ENCODE measurements at regions of chr6 and their contacts with region 1.

Region 1: DNA sequence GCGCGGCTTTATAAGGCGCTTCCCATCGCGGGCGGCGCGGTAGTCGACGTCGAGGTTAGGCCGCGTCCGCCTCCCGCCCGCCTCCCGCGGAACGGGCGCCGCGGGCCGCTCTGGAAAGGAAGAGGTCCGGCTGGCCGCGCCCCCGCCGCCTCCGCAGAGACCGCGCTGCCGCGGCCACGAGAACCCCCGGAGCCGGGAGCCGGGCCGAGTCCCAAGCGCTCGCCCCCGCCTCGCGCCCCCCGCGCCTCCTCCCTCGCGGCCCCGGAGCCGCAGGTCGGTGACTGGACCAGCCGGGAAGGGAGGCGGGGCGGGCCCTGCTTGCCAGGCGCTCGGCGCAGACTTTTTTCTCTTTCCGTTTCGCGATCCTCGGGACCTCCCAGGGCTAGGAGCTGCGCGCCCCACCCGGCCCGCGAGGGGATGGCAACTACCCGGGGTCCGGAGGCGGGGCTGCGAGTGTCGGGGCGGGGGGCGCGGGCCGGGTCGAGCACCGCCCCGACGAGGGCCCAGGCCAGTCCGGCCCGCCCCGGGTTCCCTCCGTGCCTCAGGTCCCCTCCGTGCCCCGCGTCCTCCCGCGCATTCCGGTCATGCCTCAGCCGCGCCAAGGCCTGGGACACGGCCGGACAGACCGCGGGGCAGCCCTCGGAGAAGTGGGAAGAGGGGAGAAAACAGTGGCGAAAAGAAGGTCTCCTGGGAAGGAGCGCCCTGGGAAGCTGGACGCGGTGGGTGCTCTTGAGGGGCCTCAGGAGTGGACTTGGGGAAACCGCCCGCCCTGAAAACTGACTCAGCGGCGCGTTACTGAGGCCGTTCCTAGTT is 423 bp upstream of the PXDC1 start:
- DNase-seq: peak; percentile 95 to 98
- ATAC-seq: peak; percentile 78
- H3K4me3 ChIP-seq: peak overlapping the region; percentile 75 to 98
- H3K27ac ChIP-seq: peak overlapping the region; percentile 97 to 99
- H3K4me1 ChIP-seq: no peaks in the 10 kb centered on the region
- H3K27me3 ChIP-seq: no peaks in the 10 kb centered on the region

Region 2: DNA sequence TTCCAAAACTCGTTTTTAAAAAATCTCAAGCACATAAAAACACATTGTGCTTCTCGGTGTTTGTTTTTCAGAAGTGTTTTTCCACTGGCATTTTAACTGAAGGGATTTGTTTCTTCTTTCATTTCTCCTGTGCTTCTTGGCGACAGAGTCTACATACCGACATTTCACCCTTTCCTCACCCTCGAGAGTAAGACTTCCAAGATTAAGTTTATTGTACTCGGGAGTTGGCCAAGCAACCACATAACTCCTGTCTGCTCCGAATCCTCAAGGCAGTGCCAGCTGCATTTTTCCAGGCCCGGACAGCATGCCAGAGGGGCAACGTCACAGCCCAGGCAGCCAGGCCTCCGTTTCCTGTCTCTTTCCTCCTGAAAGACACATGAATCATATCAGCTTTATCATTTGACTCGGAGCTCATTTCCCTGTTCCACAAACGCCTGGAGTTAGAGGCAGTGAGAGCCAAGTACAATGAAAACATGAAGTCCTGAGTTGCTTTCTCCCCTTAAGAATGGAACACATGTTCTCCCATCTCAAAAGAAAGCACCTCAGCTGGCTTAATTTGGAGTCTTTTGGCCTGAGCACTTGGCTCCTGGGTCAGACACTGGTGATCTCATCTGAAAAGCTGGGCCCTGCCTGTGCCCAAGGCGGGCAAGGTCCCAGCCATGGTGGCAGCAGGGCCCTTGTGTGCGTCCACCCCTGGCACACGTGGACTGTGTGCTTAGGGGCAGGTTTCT is 74.1 kb after region 1 on chr6:
- intact Hi-C with region 1: loop called (anchors 1 to 2 kb)
- DNase-seq: peak; percentile 96 to 97
- ATAC-seq: peak; percentile 93
- H3K4me3 ChIP-seq: no peak overlapping the region
- H3K27ac ChIP-seq: peak overlapping the region; percentile 90 to 98
- H3K4me1 ChIP-seq: no peaks in the 10 kb centered on the region
- H3K27me3 ChIP-seq: no peaks in the 10 kb centered on the region

Region 3: DNA sequence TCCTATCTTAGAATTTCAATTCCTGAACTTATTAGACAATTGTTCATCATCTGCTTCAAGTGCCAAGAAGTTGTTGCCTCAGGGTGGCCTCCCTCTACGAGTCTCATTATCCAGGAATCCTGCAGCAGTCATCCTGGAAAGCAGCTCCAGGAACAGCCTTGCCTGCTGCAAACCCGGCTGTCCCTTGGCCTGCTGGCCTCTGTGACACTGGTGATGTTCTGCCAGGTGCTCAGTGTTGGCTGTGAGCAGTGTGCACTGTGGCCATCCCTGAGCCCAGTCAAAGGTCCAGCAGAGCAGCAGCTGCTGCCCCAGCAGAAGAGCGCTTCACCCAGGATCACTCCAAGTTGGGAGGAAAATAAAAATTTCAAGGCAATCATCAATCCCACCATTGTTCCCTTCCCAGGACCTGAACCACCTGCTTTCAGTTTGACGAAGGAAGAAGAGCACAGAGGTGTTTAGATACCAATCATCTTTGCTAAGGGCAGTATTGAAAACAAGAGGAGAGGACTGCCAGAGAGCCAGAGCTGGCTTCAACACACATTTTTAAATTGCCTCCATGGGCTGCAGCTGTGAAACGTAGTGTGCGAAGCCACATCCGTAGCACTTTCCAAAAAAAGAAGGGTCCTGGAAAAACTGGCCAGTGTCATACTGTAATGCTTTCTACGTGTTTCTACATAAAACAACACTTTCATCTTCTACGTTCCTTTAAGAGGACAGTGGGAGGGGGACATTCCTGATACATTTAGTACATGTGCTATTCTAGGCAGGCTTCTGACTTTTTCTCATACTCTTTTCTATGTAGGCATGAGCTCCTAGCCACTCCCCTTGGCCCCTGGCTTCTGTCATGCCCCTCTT is 90.0 kb after region 1 on chr6:
- intact Hi-C with region 1: loop called in 1 of 2 experiments (anchors 5 kb)
- DNase-seq: peak in 1 of 2 donors; percentile 78
- ATAC-seq: peak; percentile 75
- H3K4me3 ChIP-seq: no peak overlapping the region
- H3K27ac ChIP-seq: peak overlapping the region; percentile 83 to 99
- H3K4me1 ChIP-seq: peaks cover 5% of the 10 kb centered on the region in 2 donors
- H3K27me3 ChIP-seq: no peaks in the 10 kb centered on the region

Region 4: DNA sequence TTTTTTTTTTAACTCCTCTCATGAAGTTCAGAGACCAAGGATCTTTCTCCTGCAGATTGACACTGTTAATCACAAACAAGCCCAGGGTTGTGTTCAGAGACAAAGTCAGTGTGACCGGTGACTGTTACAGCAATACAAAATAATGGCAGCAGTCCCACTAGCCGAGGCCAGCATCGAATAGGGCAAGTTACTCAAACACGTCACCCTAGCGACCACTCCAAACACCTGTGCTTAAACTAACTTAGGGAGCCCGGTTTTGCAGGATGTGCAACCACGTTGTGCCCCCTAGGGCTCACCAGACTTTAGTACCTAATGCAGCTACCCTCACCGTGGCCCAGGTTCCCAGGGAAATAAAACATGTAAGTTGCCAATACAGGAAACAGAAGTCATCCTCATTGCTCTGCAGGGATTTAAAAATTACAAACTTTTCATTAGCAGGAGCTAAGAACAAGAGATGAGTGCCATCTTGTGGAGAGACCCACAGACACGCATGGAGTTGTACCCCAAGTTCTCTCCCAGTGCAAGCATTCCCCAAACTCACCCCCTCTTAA is 135.3 kb after region 1 on chr6:
- intact Hi-C with region 1: loop called in 1 of 2 experiments (anchors 5 kb)
- DNase-seq: no peak
- ATAC-seq: no peak
- H3K4me3 ChIP-seq: no peak overlapping the region
- H3K27ac ChIP-seq: no peak overlapping the region
- H3K4me1 ChIP-seq: no peaks in the 10 kb centered on the region
- H3K27me3 ChIP-seq: no peaks in the 10 kb centered on the region